Mammary epithelial cell (primary cell): ENCODE measurements at regions of chr5 and their contacts with region 1.

Region 1: GRCh38 chr5:122019919-122020590 is 58.0 kb downstream of the LOX start:
- DNase-seq: no peak
- H3K4me3 ChIP-seq: no peak overlapping the region
- H3K27ac ChIP-seq: no peak overlapping the region
- H3K4me1 ChIP-seq: no peaks in the 10 kb centered on the region
- H3K27me3 ChIP-seq: no peaks in the 10 kb centered on the region
- CTCF ChIP-seq: no peak

Region 2: DNA sequence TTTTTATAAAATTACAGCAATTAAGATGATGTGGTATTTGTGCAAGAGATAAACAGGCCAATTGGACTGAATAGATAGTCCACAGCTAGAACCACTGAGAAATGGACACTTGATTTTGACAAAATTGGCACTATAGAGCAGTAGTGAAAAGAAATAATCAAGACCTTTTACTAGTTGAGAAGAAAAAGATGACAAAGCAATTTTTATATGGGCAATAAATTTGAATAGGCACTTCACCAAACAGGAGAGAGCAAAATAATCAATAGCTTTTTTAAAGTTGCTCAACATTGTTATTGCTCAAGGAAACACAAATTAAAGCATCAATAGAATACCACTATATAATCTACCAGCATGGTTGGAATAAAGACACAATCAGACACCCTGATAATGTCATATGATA is 361.8 kb before region 1 on chr5:
- CTCF ChIA-PET with region 1: no interaction called
- dilution Hi-C with region 1: no loop called
- in situ Hi-C with region 1: no loop called
- intact Hi-C with region 1: no loop called
- DNase-seq: no peak
- H3K4me3 ChIP-seq: no peak overlapping the region
- H3K27ac ChIP-seq: no peak overlapping the region
- H3K4me1 ChIP-seq: no peaks in the 10 kb centered on the region
- H3K27me3 ChIP-seq: no peaks in the 10 kb centered on the region
- CTCF ChIP-seq: no peak

Region 3: GRCh38 chr5:122053181-122054109 is 33.4 kb after region 1 on chr5:
- CTCF ChIA-PET with region 1: no interaction called
- dilution Hi-C with region 1: loop called (anchors 5 kb)
- in situ Hi-C with region 1: no loop called
- intact Hi-C with region 1: no loop called
- DNase-seq: no peak
- H3K4me3 ChIP-seq: no peak overlapping the region
- H3K27ac ChIP-seq: no peak overlapping the region
- H3K4me1 ChIP-seq: no peaks in the 10 kb centered on the region
- H3K27me3 ChIP-seq: no peaks in the 10 kb centered on the region
- CTCF ChIP-seq: no peak